Uterus (tissue), 4 donors: ENCODE measurements at regions of chr20 and their contacts with region 1.

Region 1: DNA sequence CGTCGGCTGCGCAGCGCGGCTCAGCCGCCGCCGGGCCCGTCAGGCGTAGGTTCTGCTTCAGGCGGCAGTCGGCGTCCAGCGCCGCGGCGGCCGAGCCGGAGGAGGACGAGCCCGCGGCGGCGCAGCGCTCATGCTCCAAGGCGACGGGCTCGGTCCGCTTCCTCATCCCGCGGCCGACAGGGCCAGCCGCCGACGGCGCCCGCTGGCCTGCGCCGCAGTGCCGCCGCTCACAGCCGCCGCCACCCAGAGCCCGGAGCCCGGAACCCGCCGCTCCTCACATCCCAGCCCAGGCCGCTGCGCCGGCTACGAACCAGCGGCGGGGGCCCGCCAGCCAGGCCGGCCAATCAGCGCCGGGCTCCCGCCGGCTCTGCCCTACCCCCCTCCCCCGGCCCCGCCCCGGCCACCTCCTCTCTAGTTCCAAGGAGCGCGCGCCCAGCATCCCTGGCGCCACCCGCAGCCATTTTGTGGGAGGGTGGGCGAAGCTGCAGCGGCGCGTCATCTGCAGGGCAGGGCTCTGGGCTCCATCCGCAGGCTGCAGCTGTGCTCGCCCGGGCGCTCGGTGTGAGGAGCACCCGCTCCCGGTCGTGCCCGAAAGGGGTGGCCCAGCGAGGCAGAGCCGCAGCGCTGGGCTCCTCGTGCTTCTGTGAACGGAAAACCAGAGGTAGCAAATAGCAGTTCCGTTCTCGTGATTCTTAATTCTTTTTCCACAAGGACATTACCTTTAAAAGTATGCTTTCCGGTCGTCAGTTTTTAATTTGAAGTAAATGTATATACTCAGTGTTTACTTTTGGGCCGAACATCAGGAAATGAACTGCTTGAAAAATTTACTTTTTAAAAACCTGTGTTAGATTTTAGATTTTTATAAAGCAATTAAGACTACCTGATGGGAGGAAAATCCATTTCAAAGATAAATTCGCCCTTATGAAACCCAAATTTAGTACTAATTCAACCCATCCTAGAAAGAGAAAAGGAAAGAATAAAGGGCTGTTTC is at the start of gene ABHD12:
- DNase-seq: peak; percentile 95
- H3K4me3 ChIP-seq: peak within 1 kb of the TSS; percentile 56 to 83
- H3K27ac ChIP-seq: peak within 1 kb of the TSS; percentile 83 to 84
- H3K4me1 ChIP-seq: no peaks in the 10 kb centered on the region
- H3K27me3 ChIP-seq: no peaks in the 10 kb centered on the region
- CTCF ChIP-seq: no peak
- POLR2A ChIP-seq: peak; percentile 55 to 75
- total RNA-seq, gene ABHD12: 10.0 to 47.6 (median 36.3) TPM

Region 2: GRCh38 chr20:25294459-25295385 is 96.1 kb before region 1 on chr20:
- intact Hi-C with region 1: loop called (anchors 10 kb)
- DNase-seq: peak; percentile 47 to 54
- H3K4me3 ChIP-seq: no peak overlapping the region
- H3K27ac ChIP-seq: no peak overlapping the region
- H3K4me1 ChIP-seq: no peaks in the 10 kb centered on the region
- H3K27me3 ChIP-seq: no peaks in the 10 kb centered on the region
- CTCF ChIP-seq: peak; percentile 62 to 84 (median 69)
- POLR2A ChIP-seq: no peak